Mammary epithelial cell (primary cell): ENCODE measurements at regions of chr6 and their contacts with region 1.

Region 1: DNA sequence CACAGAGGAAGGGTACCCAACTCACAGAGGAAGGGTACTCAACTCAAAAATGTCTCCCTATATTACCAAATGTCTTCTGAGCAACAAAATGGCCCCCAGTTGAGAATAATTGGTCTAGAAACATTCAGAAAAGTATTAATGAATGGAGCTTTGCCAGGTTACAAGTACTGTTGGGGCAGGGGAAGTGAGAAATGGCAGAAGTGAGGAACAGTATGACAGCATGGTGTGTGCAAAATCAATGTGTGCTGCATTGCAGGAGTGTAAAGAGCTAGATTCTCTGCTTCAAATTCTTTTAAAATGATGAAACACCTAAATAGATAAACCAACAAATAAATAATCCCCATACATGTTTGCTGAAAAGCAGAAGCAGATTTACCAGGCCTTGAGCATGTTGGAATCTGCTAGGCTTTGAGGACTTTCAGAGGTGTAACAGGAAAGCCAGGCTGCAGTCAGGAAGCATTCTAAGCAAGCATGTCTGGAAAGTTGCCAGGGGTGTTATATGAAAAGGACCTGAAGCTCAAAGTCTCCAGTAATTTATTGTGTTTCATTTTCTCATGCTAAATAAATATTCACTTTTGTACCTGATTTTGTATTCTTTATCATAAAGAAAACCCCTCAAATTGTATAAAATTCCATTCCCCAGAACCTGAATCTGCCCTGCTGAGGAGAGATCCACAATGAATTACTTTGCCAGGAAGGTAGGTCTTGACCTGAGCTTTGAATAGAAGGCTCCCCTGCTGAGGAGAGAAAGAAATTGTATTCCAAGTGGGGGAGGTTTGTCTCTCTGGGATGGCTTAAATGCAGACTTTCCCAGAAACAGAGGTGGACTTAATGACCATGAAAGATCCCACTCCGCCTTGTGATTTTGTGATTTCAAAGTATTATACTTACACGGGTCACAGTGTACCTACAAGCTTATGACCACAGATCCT is 265.0 kb upstream of the MARCKS start:
- DNase-seq: no peak
- H3K4me3 ChIP-seq: no peak overlapping the region
- H3K27ac ChIP-seq: no peak overlapping the region
- H3K4me1 ChIP-seq: no peaks in the 10 kb centered on the region
- H3K27me3 ChIP-seq: no peaks in the 10 kb centered on the region
- CTCF ChIP-seq: no peak

Region 2: GRCh38 chr6:113122060-113122459 is 470.1 kb before region 1 on chr6:
- CTCF ChIA-PET with region 1: no interaction called
- dilution Hi-C with region 1: no loop called
- in situ Hi-C with region 1: no loop called
- intact Hi-C with region 1: loop called (anchors 10 kb)
- DNase-seq: peak; percentile 77
- H3K4me3 ChIP-seq: no peak overlapping the region
- H3K27ac ChIP-seq: no peak overlapping the region
- H3K4me1 ChIP-seq: peaks cover 24% of the 10 kb centered on the region
- H3K27me3 ChIP-seq: no peaks in the 10 kb centered on the region
- CTCF ChIP-seq: peak; percentile 43 to 54

Region 3: GRCh38 chr6:113690281-113691259 is 98.4 kb after region 1 on chr6:
- CTCF ChIA-PET with region 1: no interaction called
- dilution Hi-C with region 1: no loop called
- in situ Hi-C with region 1: no loop called
- intact Hi-C with region 1: loop called (anchors 2 kb)
- DNase-seq: peak; percentile 94
- H3K4me3 ChIP-seq: no peak overlapping the region
- H3K27ac ChIP-seq: peak overlapping the region; percentile 49
- H3K4me1 ChIP-seq: peaks cover 17% of the 10 kb centered on the region
- H3K27me3 ChIP-seq: no peaks in the 10 kb centered on the region
- CTCF ChIP-seq: no peak

Region 4: DNA sequence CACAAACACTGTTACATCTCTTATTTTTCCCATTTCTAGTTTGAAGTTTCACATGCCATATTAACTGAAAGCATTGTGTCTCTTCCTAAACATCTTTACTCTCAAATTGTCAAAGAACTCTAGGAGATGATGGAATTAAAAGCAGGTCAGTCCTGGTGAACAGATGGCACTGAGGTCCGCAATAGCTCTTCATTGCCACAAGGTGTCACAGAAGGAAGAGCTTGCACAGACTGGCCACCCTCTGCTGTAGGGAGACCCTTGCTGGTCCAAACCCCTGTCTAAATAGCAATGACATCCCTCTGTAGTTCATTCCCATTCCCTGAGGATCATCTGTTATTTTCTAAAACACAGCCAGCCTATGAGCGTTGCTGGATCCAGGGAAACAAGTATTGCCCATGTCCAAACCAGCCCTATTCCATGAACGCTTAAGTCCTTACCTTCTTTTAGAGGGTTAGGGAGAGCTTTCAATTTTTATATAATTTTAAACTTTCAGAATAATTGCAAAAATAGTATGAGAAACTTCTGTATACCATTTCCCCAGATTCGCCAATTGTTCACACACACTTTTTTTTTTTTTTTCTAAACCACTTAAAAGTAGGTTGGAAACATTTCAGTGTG is 388.9 kb after region 1 on chr6:
- CTCF ChIA-PET with region 1: no interaction called
- dilution Hi-C with region 1: no loop called
- in situ Hi-C with region 1: no loop called
- intact Hi-C with region 1: no loop called
- DNase-seq: no peak
- H3K4me3 ChIP-seq: no peak overlapping the region
- H3K27ac ChIP-seq: no peak overlapping the region
- H3K4me1 ChIP-seq: no peaks in the 10 kb centered on the region
- H3K27me3 ChIP-seq: no peaks in the 10 kb centered on the region
- CTCF ChIP-seq: peak; percentile 48 to 62